ENCODE measurements at regions of chr3 and their contacts with region 1.

Region 1: GRCh38 chr3:49703443-49703927 is 14.1 kb downstream of the RNF123 start:
- DNase-seq: peak; percentile 58 to 62
- ATAC-seq: peak; percentile 87 to 94
- H3K4me3 ChIP-seq: no peak overlapping the region
- H3K27ac ChIP-seq: no peak overlapping the region
- H3K4me1 ChIP-seq: no peaks in the 10 kb centered on the region
- CTCF ChIP-seq: peak; percentile 53
- EP300 ChIP-seq: no peak
- POLR2A ChIP-seq: no peak
- RAD21 ChIP-seq: peak; percentile 64 to 74

Region 2: DNA sequence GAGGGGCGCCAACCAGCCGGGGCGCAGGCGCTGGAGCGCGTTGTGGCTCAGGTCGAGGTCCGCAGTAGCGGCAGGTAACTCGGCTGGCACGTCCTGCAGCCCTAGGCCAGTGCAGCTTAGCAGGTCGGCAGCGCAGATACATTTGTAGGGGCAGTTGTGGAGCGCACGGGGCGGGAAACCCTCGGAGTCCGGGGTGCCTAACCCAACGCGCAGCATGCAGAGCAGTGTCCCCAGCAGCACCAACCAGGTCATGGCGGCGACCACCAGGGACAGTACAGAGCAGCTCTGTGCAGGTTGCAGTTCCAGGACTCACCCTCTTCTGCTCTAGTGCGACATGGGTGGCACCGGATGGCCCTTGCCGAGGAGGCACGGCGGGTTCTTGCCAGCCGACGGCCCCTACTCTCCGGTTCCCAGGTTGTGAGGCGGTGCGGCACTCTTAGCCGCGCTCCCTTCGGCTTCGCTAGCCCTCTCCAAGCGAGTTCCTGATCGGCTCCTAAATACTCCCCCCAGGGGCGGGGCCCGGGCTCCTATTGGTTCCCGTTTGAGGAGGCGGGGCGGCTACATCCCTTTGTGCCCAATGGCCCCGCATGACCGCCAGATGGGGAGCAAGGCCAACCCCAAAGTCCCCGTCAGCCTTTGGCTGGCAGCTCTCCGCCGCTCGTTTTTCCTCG is 15.9 kb after region 1 on chr3 and contains the start of gene AMIGO3:
- CTCF ChIA-PET with region 1: interaction called, 24 read pairs
- POLR2A ChIA-PET with region 1: no interaction called
- DNase-seq: peak; percentile 82 to 96
- ATAC-seq: peak; percentile 63 to 77
- H3K4me3 ChIP-seq: peak within 1 kb of the TSS; percentile 34; the same call in 2 of the 3 replicates
- H3K27ac ChIP-seq: peak within 1 kb of the TSS in 1 of 2 experiments; percentile 79; a peak in 3 of 6 replicates
- H3K4me1 ChIP-seq: peaks cover 8% of the 10 kb centered on the region
- CTCF ChIP-seq: no peak
- EP300 ChIP-seq: no peak
- POLR2A ChIP-seq: peak; percentile 63
- RAD21 ChIP-seq: no peak
- polyA plus RNA-seq, gene AMIGO3: 0.03 TPM in 1 of 2 replicates, not detected in the other

Region 3: DNA sequence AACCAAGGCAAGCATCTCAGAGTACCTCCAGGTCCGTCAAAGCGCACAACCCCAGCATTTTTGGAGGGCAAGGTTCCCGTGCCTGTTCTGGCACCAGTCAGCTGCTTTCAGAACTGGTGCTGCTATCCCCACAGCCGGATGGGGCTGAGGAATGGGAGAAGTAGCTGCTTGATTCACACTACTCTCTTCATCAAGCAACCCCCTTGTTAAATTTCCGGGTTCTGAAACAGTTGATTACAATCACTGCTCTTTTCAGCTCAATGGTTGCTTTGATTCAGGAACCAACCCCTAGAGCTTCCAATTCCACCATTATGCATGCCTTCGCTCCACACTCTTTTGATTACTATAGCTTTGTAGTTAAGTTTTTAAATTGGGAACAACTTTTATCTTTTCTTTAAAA is 122.5 kb after region 1 on chr3:
- CTCF ChIA-PET with region 1: no interaction called
- POLR2A ChIA-PET with region 1: no interaction called
- DNase-seq: no peak
- ATAC-seq: no peak
- H3K4me3 ChIP-seq: no peak overlapping the region
- H3K27ac ChIP-seq: no peak overlapping the region
- H3K4me1 ChIP-seq: no peaks in the 10 kb centered on the region
- CTCF ChIP-seq: no peak
- EP300 ChIP-seq: no peak
- POLR2A ChIP-seq: no peak
- RAD21 ChIP-seq: no peak

Measured in A549 (cell line).